GM12878 (cell line): ENCODE measurements at regions of chr15 and their contacts with region 1.

Region 1: DNA sequence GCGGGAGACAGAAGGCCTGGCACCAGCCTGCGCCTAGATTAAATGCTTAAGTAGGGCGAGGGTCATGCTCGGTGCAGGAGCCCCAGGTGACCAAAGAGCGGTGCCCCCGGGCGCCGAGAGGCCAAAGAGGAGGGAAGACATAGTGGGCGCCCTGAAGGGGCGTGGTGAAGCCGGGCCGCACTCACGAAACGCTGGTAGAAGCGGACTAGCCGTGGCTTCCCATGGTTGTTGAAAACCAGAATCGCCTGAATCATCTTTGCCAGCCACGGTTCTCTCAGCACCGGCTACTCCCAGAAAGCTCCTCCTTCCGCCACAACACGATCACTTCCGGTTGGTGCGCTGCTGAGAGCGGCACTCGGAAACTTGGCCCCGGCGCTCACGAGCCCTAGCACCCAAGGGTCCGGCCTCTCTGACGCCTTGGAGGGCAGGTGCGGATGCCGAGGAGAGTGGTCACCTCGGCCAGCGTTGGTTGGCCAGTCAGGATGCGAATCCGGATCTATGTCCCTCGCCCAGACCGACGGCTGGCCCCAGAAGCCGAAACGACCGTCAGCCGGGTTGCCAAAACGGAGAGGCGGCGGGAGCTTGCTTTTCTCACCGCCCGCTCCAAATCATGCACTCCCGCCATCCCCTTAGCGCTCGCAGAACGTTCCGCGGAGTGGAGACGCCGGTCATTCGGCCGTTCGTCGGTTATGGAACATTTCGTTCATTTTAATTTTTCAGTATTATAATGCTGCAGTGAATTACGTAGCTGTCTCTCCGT is at the start of gene AP3S2:
- DNase-seq: peak; percentile 73
- ATAC-seq: peak; percentile 90
- H3K4me3 ChIP-seq: peak within 1 kb of the TSS; percentile 97
- H3K27ac ChIP-seq: peak within 1 kb of the TSS; percentile 87
- H3K4me1 ChIP-seq: peaks cover 23% of the 10 kb centered on the region
- H3K27me3 ChIP-seq: no peaks in the 10 kb centered on the region
- CTCF ChIP-seq: no peak
- EP300 ChIP-seq: peak in 1 of 2 experiments; percentile 31; a peak in 1 of 4 replicates
- POLR2A ChIP-seq: peak; percentile 92
- RAD21 ChIP-seq: no peak
- polyA plus RNA-seq, gene AP3S2: 10.0 to 13.1 TPM

Region 2: DNA sequence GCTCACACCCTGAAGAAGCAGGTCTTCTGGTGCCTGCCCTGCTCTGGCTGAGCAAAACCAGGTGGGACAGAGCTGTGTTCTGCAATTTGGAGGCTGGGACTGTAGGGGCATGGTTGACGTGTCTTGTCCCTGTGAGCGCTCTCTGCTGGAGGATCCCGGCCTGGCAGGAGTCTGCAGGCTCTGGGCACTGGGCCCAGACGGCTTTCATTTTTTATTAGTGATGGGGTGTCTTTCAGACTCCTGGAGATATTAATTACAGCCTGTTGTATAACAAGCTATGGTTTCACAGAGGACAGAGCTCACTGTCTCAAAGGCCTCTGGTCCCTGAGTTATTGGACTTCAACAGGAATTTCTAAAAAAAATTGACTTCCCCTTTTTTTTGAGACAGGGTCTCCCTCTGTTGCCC is 77.7 kb after region 1 on chr15:
- CTCF ChIA-PET with region 1: interaction called, 18 read pairs
- POLR2A ChIA-PET with region 1: no interaction called
- RAD21 ChIA-PET with region 1: interaction called, 6 read pairs
- SMC1A ChIA-PET with region 1: interaction called, 3 read pairs
- in situ Hi-C with region 1: no loop called
- intact Hi-C with region 1: loop called (anchors 2 kb)
- DNase-seq: peak; percentile 11
- ATAC-seq: peak; percentile 100
- H3K4me3 ChIP-seq: no peak overlapping the region
- H3K27ac ChIP-seq: no peak overlapping the region
- H3K4me1 ChIP-seq: no peaks in the 10 kb centered on the region
- H3K27me3 ChIP-seq: no peaks in the 10 kb centered on the region
- CTCF ChIP-seq: peak; percentile 74 to 86 (median 86)
- EP300 ChIP-seq: no peak
- POLR2A ChIP-seq: no peak
- RAD21 ChIP-seq: peak; percentile 54

Region 3: GRCh38 chr15:90086868-90087268 is 193.0 kb after region 1 on chr15:
- CTCF ChIA-PET with region 1: interaction called, 26 read pairs
- POLR2A ChIA-PET with region 1: no interaction called
- RAD21 ChIA-PET with region 1: interaction called, 21 read pairs
- SMC1A ChIA-PET with region 1: interaction called, 7 read pairs
- in situ Hi-C with region 1: no loop called
- intact Hi-C with region 1: loop called (anchors 1 kb)
- DNase-seq: no peak
- ATAC-seq: peak; percentile 88
- H3K4me3 ChIP-seq: no peak overlapping the region
- H3K27ac ChIP-seq: no peak overlapping the region
- H3K4me1 ChIP-seq: no peaks in the 10 kb centered on the region
- H3K27me3 ChIP-seq: no peaks in the 10 kb centered on the region
- CTCF ChIP-seq: peak; percentile 79 to 87 (median 86)
- EP300 ChIP-seq: no peak
- POLR2A ChIP-seq: no peak
- RAD21 ChIP-seq: peak; percentile 79